ENCODE measurements at regions of chr10 and their contacts with region 1.

Region 1: DNA sequence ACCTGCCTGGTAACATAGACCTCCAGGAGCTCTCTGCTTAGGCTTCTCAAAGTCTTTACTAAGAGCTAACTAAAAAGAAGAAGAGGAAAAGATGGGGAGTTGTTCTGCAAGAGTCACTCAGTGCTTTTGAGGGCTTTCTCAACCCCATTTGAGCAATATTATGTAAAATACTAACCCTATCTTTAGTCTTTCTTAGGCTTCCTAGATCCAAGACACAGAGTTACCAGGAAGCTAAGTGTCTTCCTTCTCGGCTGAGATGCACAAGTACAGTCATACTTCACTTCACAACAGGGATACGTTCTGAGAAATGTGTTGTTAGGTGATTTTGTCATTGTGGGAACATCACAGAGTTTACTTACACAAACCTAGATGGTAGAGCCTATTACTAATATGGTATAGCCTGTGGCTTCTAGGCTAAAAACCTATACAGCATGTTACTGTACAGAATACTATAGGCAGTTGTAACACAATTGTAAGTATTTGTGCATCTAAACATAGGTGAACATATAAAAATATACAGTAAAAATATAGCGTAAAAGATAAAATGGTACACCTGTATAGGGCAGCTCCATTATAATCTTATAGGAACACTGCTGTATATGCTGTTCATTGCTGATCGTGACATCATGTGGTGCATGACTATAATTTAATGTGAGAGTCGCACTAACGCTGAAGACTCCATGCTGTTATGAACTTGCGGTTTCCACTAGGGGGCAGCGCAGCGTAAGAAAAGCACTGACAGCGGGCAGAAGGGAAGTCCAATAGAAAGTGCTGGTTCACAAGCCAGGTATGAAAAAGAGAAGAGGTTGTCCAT is 16.3 kb downstream of the ANKRD22 start:
- DNase-seq: peak; percentile 80
- H3K4me3 ChIP-seq: no peak overlapping the region
- H3K27ac ChIP-seq: no peak overlapping the region
- H3K4me1 ChIP-seq: no peaks in the 10 kb centered on the region
- H3K27me3 ChIP-seq: peaks cover 24% of the 10 kb centered on the region
- CTCF ChIP-seq: peak; percentile 89

Region 2: DNA sequence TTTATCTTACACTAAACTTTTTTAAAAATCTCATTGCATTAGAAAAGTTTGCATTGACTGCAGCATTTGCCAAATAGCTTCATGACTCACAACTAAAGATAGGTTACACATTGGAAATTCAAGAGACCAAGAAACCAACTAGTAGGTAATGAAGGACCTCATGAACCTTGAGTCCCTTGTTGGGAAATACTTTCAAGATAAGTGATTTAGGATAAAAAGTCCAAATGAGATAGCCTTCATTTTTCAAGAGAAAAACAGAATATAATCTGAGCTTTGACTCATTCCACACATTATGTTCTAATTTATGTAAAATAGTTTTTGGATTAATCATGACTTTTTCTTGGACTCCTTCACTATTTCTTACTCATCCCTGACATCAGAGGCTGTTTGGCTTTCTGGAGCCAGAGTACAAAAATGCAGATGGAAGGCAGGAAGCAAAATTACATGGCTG is 184.2 kb before region 1 on chr10:
- intact Hi-C with region 1: no loop called
- DNase-seq: no peak
- H3K4me3 ChIP-seq: no peak overlapping the region
- H3K27ac ChIP-seq: no peak overlapping the region
- H3K4me1 ChIP-seq: no peaks in the 10 kb centered on the region
- H3K27me3 ChIP-seq: peaks cover 5% of the 10 kb centered on the region
- CTCF ChIP-seq: no peak

Region 3: GRCh38 chr10:88932539-88933256 is 97.4 kb after region 1 on chr10:
- intact Hi-C with region 1: loop called (anchors 2 kb)
- DNase-seq: no peak
- H3K4me3 ChIP-seq: no peak overlapping the region
- H3K27ac ChIP-seq: peak overlapping the region; percentile 45
- H3K4me1 ChIP-seq: peaks cover 39% of the 10 kb centered on the region
- H3K27me3 ChIP-seq: no peaks in the 10 kb centered on the region
- CTCF ChIP-seq: peak; percentile 94

Region 4: GRCh38 chr10:88986549-88987242 is 151.4 kb after region 1 on chr10:
- intact Hi-C with region 1: loop called (anchors 5 kb)
- DNase-seq: no peak
- H3K4me3 ChIP-seq: no peak overlapping the region
- H3K27ac ChIP-seq: peak overlapping the region; percentile 10
- H3K4me1 ChIP-seq: peaks cover 71% of the 10 kb centered on the region
- H3K27me3 ChIP-seq: no peaks in the 10 kb centered on the region
- CTCF ChIP-seq: peak; percentile 89

Region 5: DNA sequence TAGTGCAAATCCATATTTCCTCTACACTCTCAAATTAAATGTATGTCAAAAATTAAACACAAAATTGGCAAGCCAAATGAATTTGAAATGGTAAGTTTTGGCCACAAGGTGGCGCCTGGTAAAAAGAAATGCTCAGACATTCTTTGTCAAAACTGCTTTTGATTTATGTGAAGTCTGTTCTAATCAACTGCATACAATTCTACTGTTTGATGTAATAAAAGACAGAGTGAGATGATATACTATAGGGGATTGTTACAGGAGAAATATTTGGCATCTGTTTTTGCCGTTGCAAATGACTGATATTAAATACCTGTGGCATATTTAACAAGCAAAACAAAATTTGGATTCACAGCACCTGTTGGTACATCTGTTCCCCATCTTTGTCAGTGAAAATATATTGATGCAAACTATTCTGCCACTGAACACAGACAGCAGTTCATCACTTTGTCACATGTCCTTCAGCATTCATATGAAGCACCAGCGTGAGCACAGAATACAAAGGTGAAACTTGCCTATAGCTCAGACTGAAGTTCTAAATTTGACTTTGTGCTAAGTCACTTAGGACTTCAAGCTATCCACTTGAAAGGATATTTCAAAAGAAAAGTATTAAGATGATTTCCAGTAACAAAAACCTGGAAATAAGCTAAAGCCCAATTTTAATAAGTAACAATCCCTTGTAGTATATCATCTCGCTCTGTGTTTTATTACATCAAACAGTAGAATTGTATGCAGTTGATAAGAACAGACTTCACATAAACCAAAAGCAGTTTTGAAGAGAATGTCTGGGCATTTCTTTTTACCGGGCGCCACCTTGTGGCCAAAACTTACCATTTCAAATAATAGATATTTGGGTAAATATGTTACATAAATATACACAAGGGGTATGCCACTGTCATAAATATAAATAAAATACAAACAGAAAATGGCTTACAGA is 382.0 kb after region 1 on chr10:
- intact Hi-C with region 1: loop called (anchors 10 kb)
- DNase-seq: peak; percentile 33
- H3K4me3 ChIP-seq: peak overlapping the region; percentile 7
- H3K27ac ChIP-seq: peak overlapping the region; percentile 55
- H3K4me1 ChIP-seq: peaks cover 14% of the 10 kb centered on the region
- H3K27me3 ChIP-seq: no peaks in the 10 kb centered on the region
- CTCF ChIP-seq: peak; percentile 77

Measured in left ventricle myocardium inferior (tissue), 1 donor.